Calu3 (cell line): ENCODE measurements at regions of chr1 and their contacts with region 1.

Region 1: DNA sequence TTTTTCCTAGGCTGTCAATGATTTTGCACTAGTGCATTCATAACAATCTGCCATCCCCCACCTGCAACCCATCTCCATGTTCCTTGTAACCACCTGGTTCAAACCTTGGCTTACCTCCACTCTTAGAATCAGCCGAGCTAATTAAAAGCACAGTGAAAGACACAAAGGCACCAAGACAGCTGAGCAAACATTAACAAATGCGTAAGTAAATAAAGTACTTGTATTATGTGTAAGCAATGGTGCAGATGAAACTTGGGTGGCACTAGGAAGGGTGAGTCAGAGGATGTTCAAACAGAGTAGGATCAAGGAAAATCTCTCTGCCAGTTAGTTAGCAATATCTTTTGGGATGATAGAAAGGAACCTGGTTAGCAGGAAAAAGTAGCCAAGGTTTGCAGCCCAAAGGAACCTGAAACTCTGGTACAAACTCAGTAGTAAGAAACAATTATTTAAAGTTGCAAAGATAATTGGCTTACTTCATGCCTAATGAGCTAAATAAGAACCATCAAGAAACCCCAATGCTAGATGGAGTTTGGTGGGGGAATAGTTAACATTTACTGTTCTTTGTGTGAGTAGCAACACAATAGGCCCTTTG is 5.2 kb upstream of the FOXJ3 start:
- DNase-seq: peak; percentile 40
- H3K4me3 Mint-ChIP-seq: no peak overlapping the region
- H3K27ac Mint-ChIP-seq: peak overlapping the region; percentile 18
- H3K4me1 Mint-ChIP-seq: peaks cover 40% of the 10 kb centered on the region
- H3K27me3 Mint-ChIP-seq: no peaks in the 10 kb centered on the region
- CTCF ChIP-seq: no peak

Region 2: GRCh38 chr1:42462828-42463763 is 122.9 kb after region 1 on chr1 and contains the start of gene CCDC30:
- CTCF ChIA-PET with region 1: interaction called, 3 read pairs
- intact Hi-C with region 1: loop called (anchors 5 kb)
- DNase-seq: peak; percentile 96
- H3K4me3 Mint-ChIP-seq: peak within 1 kb of the TSS; percentile 86
- H3K27ac Mint-ChIP-seq: peak within 1 kb of the TSS; percentile 32
- H3K4me1 Mint-ChIP-seq: peaks cover 25% of the 10 kb centered on the region
- H3K27me3 Mint-ChIP-seq: no peaks in the 10 kb centered on the region
- CTCF ChIP-seq: no peak
- total RNA-seq, gene CCDC30: 4.4 and 5.1 TPM in 2 replicates

Region 3: GRCh38 chr1:42567043-42567442 is 226.9 kb after region 1 on chr1:
- CTCF ChIA-PET with region 1: no interaction called
- intact Hi-C with region 1: loop called (anchors 5 kb)
- DNase-seq: no peak
- H3K4me3 Mint-ChIP-seq: no peak overlapping the region
- H3K27ac Mint-ChIP-seq: no peak overlapping the region
- H3K4me1 Mint-ChIP-seq: no peaks in the 10 kb centered on the region
- H3K27me3 Mint-ChIP-seq: no peaks in the 10 kb centered on the region
- CTCF ChIP-seq: no peak

Region 4: GRCh38 chr1:42690477-42691156 is 350.4 kb after region 1 on chr1:
- CTCF ChIA-PET with region 1: interaction called, 3 read pairs
- intact Hi-C with region 1: loop called (anchors 5 kb)
- DNase-seq: no peak
- H3K4me3 Mint-ChIP-seq: peak overlapping the region; percentile 68
- H3K27ac Mint-ChIP-seq: no peak overlapping the region
- H3K4me1 Mint-ChIP-seq: peaks cover 62% of the 10 kb centered on the region
- H3K27me3 Mint-ChIP-seq: no peaks in the 10 kb centered on the region
- CTCF ChIP-seq: no peak